Right cardiac atrium (tissue), 5 donors: ENCODE measurements at regions of chr6 and their contacts with region 1.

Region 1: GRCh38 chr6:123777563-123777962 is 26.1 kb upstream of the NKAIN2 start:
- DNase-seq: no peak
- ATAC-seq: no peak
- H3K4me3 ChIP-seq: no peak overlapping the region
- H3K27ac ChIP-seq: no peak overlapping the region
- H3K4me1 ChIP-seq: no peaks in the 10 kb centered on the region
- H3K27me3 ChIP-seq: no peaks in the 10 kb centered on the region

Region 2: GRCh38 chr6:123965894-123966293 is 188.3 kb after region 1 on chr6:
- intact Hi-C with region 1: no loop called
- DNase-seq: no peak
- ATAC-seq: peak; percentile 40 to 42
- H3K4me3 ChIP-seq: no peak overlapping the region
- H3K27ac ChIP-seq: no peak overlapping the region
- H3K4me1 ChIP-seq: no peaks in the 10 kb centered on the region
- H3K27me3 ChIP-seq: no peaks in the 10 kb centered on the region

Region 3: DNA sequence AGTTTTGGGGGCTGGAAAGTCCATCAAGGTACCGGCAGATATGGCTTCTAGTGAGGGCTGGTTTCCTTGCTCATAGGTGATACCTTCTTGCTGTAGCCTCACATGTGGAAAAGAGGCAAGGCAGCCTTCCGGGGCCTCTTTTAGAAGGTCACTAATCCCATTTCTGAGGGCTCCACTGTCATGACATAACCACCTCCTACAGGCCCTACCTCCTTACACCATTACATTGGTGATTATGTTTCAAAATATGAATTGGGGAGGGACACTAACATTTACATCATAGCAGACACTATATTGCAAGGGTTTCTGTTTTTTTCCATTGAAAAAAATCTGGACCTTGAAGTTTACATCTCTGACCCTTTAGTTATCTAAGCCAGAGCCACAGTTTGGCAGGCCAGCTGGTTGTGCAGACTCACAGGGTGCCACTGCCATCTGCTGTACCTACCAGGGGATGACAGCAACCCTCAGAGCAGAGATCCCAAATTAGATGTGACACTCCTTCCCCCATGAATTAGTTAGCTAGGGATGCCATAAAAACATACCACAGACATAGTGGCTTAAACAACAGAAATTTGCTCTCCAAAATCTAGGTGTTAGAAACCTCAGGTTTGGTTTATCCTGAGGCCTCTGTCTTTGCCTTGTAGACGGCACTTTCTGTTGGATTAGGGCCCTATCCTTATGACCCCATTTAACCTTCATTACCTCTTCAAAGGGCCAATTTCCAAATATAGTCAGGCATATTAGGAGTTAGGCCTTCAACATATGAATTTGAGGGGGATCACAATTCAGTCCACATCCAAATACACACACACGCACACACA is 1018.3 kb after region 1 on chr6:
- intact Hi-C with region 1: loop called in 2 of 4 experiments (anchors 10 kb)
- DNase-seq: peak in 2 of 3 donors; percentile 20 to 67
- ATAC-seq: peak; percentile 76 to 88
- H3K4me3 ChIP-seq: no peak overlapping the region
- H3K27ac ChIP-seq: no peak overlapping the region
- H3K4me1 ChIP-seq: no peaks in the 10 kb centered on the region
- H3K27me3 ChIP-seq: no peaks in the 10 kb centered on the region